ENCODE measurements at regions of chr1 and their contacts with region 1.

Region 1: GRCh38 chr1:53860967-53861411 is 22.9 kb upstream of the NDC1 start:
- DNase-seq: peak; percentile 57
- H3K4me3 Mint-ChIP-seq: no peak overlapping the region
- H3K27ac Mint-ChIP-seq: no peak overlapping the region
- H3K4me1 Mint-ChIP-seq: peaks cover 12% of the 10 kb centered on the region
- H3K27me3 Mint-ChIP-seq: no peaks in the 10 kb centered on the region

Region 2: DNA sequence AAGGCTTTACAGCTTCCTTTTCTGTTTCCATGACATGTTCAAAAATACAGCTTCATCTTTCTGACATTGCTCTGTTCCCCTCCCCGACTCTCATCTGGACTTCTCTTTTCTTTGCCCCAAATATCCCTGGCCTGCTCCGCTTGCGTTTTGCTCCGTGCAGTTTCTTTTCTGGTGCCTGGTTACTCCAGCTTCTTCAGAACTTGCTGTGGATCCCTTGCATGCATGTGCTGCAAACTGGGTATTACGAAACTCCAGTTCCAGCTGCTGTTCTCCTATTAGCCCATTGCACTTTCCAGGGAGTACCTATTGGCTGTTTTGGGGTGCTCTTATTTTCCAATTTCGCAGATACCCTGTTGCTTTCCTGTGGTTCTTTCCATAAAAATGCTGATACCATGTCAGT is 13.0 kb before region 1 on chr1:
- CTCF ChIA-PET with region 1: interaction called, 24 read pairs
- POLR2A ChIA-PET with region 1: no interaction called
- intact Hi-C with region 1: no loop called
- DNase-seq: no peak
- H3K4me3 Mint-ChIP-seq: no peak overlapping the region
- H3K27ac Mint-ChIP-seq: no peak overlapping the region
- H3K4me1 Mint-ChIP-seq: no peaks in the 10 kb centered on the region
- H3K27me3 Mint-ChIP-seq: no peaks in the 10 kb centered on the region

Region 3: GRCh38 chr1:53878492-53879105 is 17.6 kb after region 1 on chr1:
- CTCF ChIA-PET with region 1: interaction called, 25 read pairs
- POLR2A ChIA-PET with region 1: no interaction called
- intact Hi-C with region 1: no loop called
- DNase-seq: no peak
- H3K4me3 Mint-ChIP-seq: no peak overlapping the region
- H3K27ac Mint-ChIP-seq: no peak overlapping the region
- H3K4me1 Mint-ChIP-seq: no peaks in the 10 kb centered on the region
- H3K27me3 Mint-ChIP-seq: no peaks in the 10 kb centered on the region

Region 4: DNA sequence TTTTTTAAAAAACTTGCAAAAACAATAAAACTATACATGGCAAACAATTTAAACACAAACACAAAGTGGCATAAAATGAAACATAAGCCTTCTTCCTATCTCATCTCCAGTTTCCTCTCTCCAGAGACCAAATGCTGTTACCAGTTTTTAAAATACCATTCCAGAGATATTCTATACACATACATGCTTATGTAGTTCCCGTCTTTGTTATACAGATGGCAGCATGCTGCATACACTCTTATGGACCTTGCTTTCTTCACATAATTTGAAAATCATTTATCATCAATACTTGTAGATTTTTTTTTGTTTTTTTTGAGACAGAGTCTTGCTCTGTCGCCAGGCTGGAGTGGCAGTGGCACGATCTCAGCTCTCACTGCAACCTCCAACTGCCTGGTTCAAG is 92.1 kb after region 1 on chr1:
- CTCF ChIA-PET with region 1: interaction called, 211 read pairs
- POLR2A ChIA-PET with region 1: no interaction called
- intact Hi-C with region 1: loop called (anchors 1 kb)
- DNase-seq: no peak
- H3K4me3 Mint-ChIP-seq: no peak overlapping the region
- H3K27ac Mint-ChIP-seq: no peak overlapping the region
- H3K4me1 Mint-ChIP-seq: peaks cover 15% of the 10 kb centered on the region
- H3K27me3 Mint-ChIP-seq: no peaks in the 10 kb centered on the region

Region 5: DNA sequence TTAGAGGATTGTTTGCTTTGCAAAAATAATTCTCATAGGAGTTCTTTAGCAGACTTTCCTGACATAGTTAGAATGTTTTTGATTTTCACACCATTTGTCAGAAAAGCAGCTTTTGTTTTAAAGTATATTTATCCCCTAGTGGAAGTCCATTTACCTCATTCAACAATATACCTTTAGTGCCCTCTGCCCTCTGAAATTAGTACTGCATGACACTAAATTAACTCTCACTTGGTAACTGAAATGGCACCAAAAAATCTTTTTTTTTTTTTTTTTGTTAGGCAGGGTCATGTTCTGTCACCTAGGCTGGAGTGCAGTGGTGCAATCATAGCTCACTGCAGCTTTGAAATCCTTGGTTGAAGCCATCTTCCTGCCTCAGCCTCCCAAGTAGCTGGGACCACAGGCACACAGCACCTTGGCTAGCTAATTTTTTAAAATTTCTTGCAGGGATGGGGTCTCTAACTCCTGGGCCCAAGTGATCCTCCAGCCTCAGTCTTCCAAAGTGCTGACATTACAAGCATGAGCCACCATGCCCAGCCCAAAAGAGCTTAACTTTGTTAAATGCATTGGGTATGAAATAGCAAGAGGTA is 98.8 kb after region 1 on chr1:
- CTCF ChIA-PET with region 1: interaction called, 211 read pairs
- POLR2A ChIA-PET with region 1: interaction called, 6 read pairs
- intact Hi-C with region 1: loop called (anchors 1 kb)
- DNase-seq: no peak
- H3K4me3 Mint-ChIP-seq: no peak overlapping the region
- H3K27ac Mint-ChIP-seq: no peak overlapping the region
- H3K4me1 Mint-ChIP-seq: peaks cover 8% of the 10 kb centered on the region
- H3K27me3 Mint-ChIP-seq: no peaks in the 10 kb centered on the region

Region 6: DNA sequence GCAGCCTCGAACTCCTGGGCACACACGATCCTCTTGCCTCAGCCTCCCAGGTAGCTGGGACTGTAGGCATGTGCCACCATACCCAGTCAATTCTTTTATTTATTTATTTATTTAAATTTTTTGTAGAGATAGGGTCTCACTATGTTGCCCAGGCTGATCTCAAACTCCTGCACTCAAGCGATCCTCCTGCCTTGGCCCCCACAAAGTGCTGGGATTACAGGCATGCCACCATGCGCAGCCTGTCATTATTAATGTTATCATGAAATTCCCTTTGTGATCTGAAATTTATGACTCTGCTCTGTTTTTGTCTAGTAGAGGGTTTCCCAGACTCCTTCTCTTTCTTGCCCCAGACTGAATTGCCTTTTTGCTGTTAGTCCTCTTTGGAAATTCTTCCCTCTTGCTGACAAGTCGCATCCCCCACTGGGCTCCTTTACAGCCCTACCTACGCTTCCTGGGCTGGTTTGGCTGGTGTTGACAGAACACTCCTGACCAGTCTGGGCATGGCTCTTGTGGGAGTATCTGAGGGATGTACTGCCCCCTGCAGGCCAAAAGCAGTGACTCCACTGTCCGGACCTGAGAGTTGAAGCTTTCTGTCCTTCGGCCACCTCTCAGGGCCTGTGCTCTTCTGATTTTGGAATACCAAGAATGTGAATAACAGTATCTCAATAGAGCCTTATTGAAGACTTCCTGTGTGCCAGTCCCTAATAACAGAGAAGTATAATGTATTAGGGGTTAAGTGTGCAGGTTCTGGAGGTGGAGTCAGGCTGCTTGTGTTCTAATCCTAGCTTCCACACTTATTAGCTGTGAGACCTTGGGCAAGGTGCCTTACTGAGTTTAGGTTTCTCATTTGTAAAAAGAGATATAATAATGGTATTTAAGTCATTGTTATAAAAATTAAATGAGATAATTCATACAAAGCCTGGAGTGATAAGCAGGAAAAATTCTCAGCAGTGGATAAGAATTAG is 220.6 kb after region 1 on chr1:
- CTCF ChIA-PET with region 1: interaction called, 26 read pairs
- POLR2A ChIA-PET with region 1: no interaction called
- intact Hi-C with region 1: loop called (anchors 10 kb)
- DNase-seq: peak; percentile 77
- H3K4me3 Mint-ChIP-seq: no peak overlapping the region
- H3K27ac Mint-ChIP-seq: no peak overlapping the region
- H3K4me1 Mint-ChIP-seq: peaks cover 5% of the 10 kb centered on the region
- H3K27me3 Mint-ChIP-seq: no peaks in the 10 kb centered on the region

Region 7: DNA sequence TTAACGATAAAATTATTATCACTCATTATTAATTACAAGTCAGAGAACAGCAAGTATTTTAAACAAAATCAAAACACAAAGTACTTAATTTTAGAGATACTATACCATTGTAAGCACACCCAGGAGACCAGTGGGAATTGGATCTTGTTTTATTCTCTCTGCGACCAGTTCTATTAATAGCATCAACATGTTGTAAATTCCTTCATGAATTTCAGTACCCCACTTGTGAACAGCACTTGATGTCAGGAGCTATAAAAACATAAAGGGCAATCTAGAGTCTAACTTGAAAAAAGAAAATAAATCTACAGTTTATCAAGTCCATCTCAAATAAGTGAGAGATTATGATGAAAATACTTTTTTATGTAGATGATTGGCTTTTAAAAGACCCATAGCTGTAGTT is 1311.3 kb after region 1 on chr1:
- CTCF ChIA-PET with region 1: no interaction called
- POLR2A ChIA-PET with region 1: no interaction called
- intact Hi-C with region 1: no loop called
- DNase-seq: no peak
- H3K4me3 Mint-ChIP-seq: no peak overlapping the region
- H3K27ac Mint-ChIP-seq: no peak overlapping the region
- H3K4me1 Mint-ChIP-seq: peaks cover 26% of the 10 kb centered on the region
- H3K27me3 Mint-ChIP-seq: no peaks in the 10 kb centered on the region

Measured in activated CD4-positive, alpha-beta memory T cell treated with anti-CD3 and anti-CD28 coated beads for 36 hours (primary cell).